ENCODE measurements at regions of chr17 and their contacts with region 1.

Region 1: GRCh38 chr17:78250891-78251794 is 19.7 kb downstream of the TMEM235 start:
- DNase-seq: peak; percentile 96
- ATAC-seq: peak; percentile 77
- H3K4me3 Mint-ChIP-seq: no peak overlapping the region; the same call in 1 of the 2 replicates
- H3K27ac Mint-ChIP-seq: peak overlapping the region; percentile 76; the same call in 1 of the 2 replicates
- H3K4me1 Mint-ChIP-seq: peaks cover 28% of the 10 kb centered on the region
- H3K27me3 Mint-ChIP-seq: no peaks in the 10 kb centered on the region
- CTCF ChIP-seq: peak; percentile 97

Region 2: GRCh38 chr17:78082988-78083387 is 168.2 kb before region 1 on chr17:
- CTCF ChIA-PET with region 1: interaction called, 15 read pairs
- POLR2A ChIA-PET with region 1: no interaction called
- DNase-seq: no peak
- ATAC-seq: no peak
- H3K4me3 Mint-ChIP-seq: no peak overlapping the region
- H3K27ac Mint-ChIP-seq: no peak overlapping the region
- H3K4me1 Mint-ChIP-seq: no peaks in the 10 kb centered on the region
- H3K27me3 Mint-ChIP-seq: no peaks in the 10 kb centered on the region
- CTCF ChIP-seq: no peak

Region 3: DNA sequence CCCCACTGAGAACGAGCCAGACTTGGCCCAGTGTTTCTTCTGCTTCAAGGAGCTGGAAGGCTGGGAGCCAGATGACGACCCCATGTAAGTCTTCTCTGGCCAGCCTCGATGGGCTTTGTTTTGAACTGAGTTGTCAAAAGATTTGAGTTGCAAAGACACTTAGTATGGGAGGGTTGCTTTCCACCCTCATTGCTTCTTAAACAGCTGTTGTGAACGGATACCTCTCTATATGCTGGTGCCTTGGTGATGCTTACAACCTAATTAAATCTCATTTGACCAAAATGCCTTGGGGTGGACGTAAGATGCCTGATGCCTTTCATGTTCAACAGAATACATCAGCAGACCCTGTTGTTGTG is 36.5 kb before region 1 on chr17:
- CTCF ChIA-PET with region 1: interaction called, 20 read pairs
- POLR2A ChIA-PET with region 1: no interaction called
- DNase-seq: no peak
- ATAC-seq: no peak
- H3K4me3 Mint-ChIP-seq: peak overlapping the region; percentile 98
- H3K27ac Mint-ChIP-seq: peak overlapping the region; percentile 87
- H3K4me1 Mint-ChIP-seq: peaks cover 21% of the 10 kb centered on the region
- H3K27me3 Mint-ChIP-seq: peaks cover 5% of the 10 kb centered on the region; the same call in 1 of the 2 replicates
- CTCF ChIP-seq: no peak

Region 4: DNA sequence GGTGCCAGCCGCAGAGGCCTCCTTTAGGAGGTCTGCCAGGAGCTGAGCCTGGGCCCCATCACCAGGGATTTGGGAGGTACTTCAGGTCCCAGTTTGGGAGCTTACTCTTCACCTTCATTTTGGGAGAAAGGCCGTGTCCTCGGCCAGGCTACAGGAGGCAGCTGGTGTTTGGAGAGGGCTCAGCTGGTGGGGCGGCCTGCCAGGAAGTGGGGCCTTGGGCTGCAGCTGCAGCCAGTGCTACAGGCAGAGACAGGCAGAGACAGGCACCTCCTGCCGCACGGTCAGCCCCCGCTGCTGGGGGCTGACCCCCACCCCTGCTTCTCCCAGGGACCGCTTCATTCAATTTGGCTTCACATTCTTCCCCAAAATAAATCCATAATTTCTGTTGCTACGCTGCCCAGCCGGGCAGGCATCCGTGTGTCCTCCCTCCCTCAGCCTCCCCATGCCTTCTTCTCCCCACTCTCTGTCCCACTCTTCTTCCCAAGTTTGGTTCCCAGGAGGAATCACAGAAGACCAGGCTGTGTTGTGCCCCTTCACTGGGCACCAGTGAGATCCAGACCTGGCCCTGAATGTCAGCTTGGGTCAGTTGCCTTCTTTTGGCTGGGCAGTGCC is 13.6 kb before region 1 on chr17:
- CTCF ChIA-PET with region 1: interaction called, 23 read pairs
- POLR2A ChIA-PET with region 1: interaction called, 3 read pairs
- DNase-seq: no peak
- ATAC-seq: no peak
- H3K4me3 Mint-ChIP-seq: no peak overlapping the region
- H3K27ac Mint-ChIP-seq: no peak overlapping the region
- H3K4me1 Mint-ChIP-seq: peaks cover 4% of the 10 kb centered on the region; the same call in 1 of the 2 replicates
- H3K27me3 Mint-ChIP-seq: peaks cover 7% of the 10 kb centered on the region
- CTCF ChIP-seq: no peak

Region 5: GRCh38 chr17:78289802-78290363 is 38.7 kb after region 1 on chr17:
- CTCF ChIA-PET with region 1: interaction called, 22 read pairs
- POLR2A ChIA-PET with region 1: no interaction called
- DNase-seq: peak; percentile 78
- ATAC-seq: peak; percentile 95
- H3K4me3 Mint-ChIP-seq: no peak overlapping the region
- H3K27ac Mint-ChIP-seq: no peak overlapping the region
- H3K4me1 Mint-ChIP-seq: peaks cover 1% of the 10 kb centered on the region
- H3K27me3 Mint-ChIP-seq: no peaks in the 10 kb centered on the region; the same call in 1 of the 2 replicates
- CTCF ChIP-seq: peak; percentile 63

Region 6: GRCh38 chr17:78365561-78366108 is 114.5 kb after region 1 on chr17:
- CTCF ChIA-PET with region 1: interaction called, 17 read pairs
- POLR2A ChIA-PET with region 1: no interaction called
- DNase-seq: peak; percentile 92
- ATAC-seq: peak; percentile 50
- H3K4me3 Mint-ChIP-seq: peak overlapping the region; percentile 46
- H3K27ac Mint-ChIP-seq: peak overlapping the region; percentile 97
- H3K4me1 Mint-ChIP-seq: peaks cover 87% of the 10 kb centered on the region
- H3K27me3 Mint-ChIP-seq: no peaks in the 10 kb centered on the region
- CTCF ChIP-seq: no peak

Region 7: GRCh38 chr17:78401246-78401645 is 150.1 kb after region 1 on chr17:
- CTCF ChIA-PET with region 1: no interaction called
- POLR2A ChIA-PET with region 1: no interaction called
- DNase-seq: no peak
- ATAC-seq: no peak
- H3K4me3 Mint-ChIP-seq: no peak overlapping the region
- H3K27ac Mint-ChIP-seq: peak overlapping the region; percentile 45; the same call in 1 of the 2 replicates
- H3K4me1 Mint-ChIP-seq: no peaks in the 10 kb centered on the region
- H3K27me3 Mint-ChIP-seq: no peaks in the 10 kb centered on the region
- CTCF ChIP-seq: no peak